Heart right ventricle (tissue), 16 donors: ENCODE measurements at regions of chr4 and their contacts with region 1.

Region 1: GRCh38 chr4:139815778-139816601 is 150.4 kb downstream of the MGST2 start:
- DNase-seq: peak; percentile 38 to 56
- ATAC-seq: peak; percentile 76 to 94 (median 89)
- H3K4me3 ChIP-seq: peak overlapping the region; percentile 16 to 58 (median 50)
- H3K27ac ChIP-seq: peak overlapping the region in 9 of 10 donors; percentile 49 to 87 (median 79)
- H3K4me1 ChIP-seq: peaks cover 5 to 66% (median 31%) of the 10 kb centered on the region in 9 donors
- H3K27me3 ChIP-seq: no peaks in the 10 kb centered on the region
- CTCF ChIP-seq: no peak

Region 2: DNA sequence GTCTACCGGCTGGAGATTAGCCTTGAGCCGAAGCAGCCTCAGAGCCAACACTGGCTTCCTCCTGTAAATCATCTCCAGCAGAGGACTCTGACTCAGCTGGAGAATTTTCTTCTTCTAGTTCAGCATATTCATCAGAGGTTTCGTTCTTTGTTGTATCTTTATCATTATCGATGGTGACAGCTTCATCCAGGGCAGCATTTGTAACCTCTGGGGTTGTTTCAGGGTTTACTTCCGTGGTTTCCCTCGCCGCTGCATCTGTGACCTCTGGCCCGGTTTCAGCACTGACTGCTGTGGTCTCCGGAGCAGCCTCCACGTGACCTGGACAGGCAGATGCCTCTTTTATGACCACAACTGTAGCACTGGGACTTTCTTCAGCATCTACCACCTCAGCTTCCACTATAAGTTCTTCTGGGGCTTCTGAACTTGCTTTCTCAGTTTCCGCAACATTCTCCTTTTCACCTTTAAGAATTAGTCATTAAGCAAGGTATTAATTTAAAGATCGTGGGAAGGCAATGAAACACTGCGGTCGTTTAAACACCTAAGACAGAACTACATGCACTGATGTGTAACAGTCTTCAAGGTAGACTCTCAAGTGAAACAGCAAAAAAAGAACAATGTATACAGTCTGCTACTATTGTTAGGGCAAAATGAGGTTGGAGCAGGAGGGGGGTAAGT is 549.3 kb before region 1 on chr4:
- intact Hi-C with region 1: no loop called
- DNase-seq: peak; percentile 68 to 74
- ATAC-seq: peak; percentile 72 to 97 (median 93)
- H3K4me3 ChIP-seq: peak overlapping the region in 7 of 10 donors; percentile 31 to 49 (median 47)
- H3K27ac ChIP-seq: peak overlapping the region in 8 of 10 donors; percentile 18 to 66 (median 44)
- H3K4me1 ChIP-seq: peaks cover 0 to 17% (median 13%) of the 10 kb centered on the region in 9 donors
- H3K27me3 ChIP-seq: no peaks in the 10 kb centered on the region
- CTCF ChIP-seq: no peak

Region 3: DNA sequence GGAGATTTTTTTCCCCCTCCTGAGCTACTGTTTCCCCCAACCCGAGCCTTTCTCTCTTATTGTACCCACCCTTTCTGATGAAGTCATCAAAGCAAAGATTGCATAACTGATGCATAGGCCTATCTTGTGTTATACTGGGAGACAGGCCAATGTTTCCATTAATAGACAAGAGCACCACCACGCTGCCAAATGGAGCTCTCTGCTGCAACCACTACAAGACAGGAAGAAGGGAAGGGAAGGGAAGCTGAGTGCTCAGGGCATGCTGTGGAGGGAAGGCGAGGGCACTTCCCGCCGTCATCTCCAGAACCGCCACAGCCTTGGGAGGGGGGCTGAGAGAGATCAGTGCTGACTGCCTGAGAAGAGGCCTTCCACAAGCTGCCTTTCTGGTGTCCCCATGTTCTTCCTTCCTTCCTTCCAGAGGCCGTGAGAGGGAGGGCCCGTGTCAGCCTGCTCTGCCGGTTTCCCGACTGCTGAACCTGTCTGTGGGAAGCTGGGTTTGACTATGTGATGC is 75.4 kb before region 1 on chr4:
- intact Hi-C with region 1: loop called in 1 of 10 experiments (anchors 5 kb)
- DNase-seq: peak; percentile 55 to 82
- ATAC-seq: peak; percentile 88 to 95 (median 94)
- H3K4me3 ChIP-seq: peak overlapping the region in 3 of 10 donors; percentile 3 to 10 (median 3)
- H3K27ac ChIP-seq: peak overlapping the region; percentile 57 to 92 (median 82)
- H3K4me1 ChIP-seq: peaks cover 16 to 51% (median 45%) of the 10 kb centered on the region in 9 donors
- H3K27me3 ChIP-seq: no peaks in the 10 kb centered on the region
- CTCF ChIP-seq: peak in 5 of 9 donors; percentile 20 to 56 (median 44)

Region 4: GRCh38 chr4:139761461-139761860 is 54.5 kb before region 1 on chr4:
- intact Hi-C with region 1: loop called in 3 of 10 experiments (anchors 5 to 10 kb)
- DNase-seq: no peak
- ATAC-seq: peak in 5 of 8 donors; percentile 9 to 19 (median 17)
- H3K4me3 ChIP-seq: no peak overlapping the region
- H3K27ac ChIP-seq: peak overlapping the region in 8 of 10 donors; percentile 20 to 95 (median 90)
- H3K4me1 ChIP-seq: peaks cover 21 to 66% (median 48%) of the 10 kb centered on the region in 9 donors
- H3K27me3 ChIP-seq: no peaks in the 10 kb centered on the region
- CTCF ChIP-seq: peak in 7 of 9 donors; percentile 11 to 52 (median 39)

Region 5: DNA sequence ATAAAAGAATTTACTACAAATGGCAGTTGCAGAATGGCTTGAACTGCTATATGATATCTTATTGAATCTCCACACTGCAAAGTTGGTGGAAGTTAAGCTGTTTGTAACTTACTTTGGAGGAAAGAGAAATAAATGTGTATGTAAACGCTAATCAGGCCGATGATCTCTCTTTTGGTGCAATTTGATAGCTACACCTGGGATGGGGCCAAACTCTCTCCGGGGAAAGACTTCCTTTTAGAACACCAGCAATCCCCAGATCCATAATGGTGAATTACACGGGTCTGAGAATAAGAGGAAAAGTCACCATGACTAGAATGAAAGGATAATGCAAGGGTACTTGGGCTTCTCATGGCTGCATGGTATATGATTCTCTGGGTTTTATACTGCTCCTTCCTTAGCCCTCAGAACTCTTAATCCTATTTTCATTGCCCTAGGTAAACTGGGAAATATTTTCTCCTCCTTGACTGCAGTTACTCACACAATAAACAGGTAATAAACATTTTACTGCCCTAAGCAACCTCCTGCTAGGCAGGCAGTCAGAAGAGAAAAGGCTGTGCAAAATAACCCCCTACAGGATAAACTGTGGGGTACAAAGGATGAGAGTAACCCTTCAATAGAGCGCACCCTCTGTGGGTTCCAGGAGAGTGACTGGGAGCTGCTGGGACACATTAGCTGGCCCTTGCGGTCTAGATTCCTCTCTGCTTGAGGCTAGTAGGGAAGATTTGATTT is 41.1 kb before region 1 on chr4:
- intact Hi-C with region 1: loop called in 2 of 10 experiments (anchors 5 kb)
- DNase-seq: no peak
- ATAC-seq: no peak
- H3K4me3 ChIP-seq: no peak overlapping the region
- H3K27ac ChIP-seq: no peak overlapping the region
- H3K4me1 ChIP-seq: peaks cover 4 to 49% (median 22%) of the 10 kb centered on the region in 9 donors
- H3K27me3 ChIP-seq: no peaks in the 10 kb centered on the region
- CTCF ChIP-seq: no peak